Transverse colon (tissue), 4 donors: ENCODE measurements at regions of chr18 and their contacts with region 1.

Region 1: GRCh38 chr18:52475325-52475724 is 135.3 kb downstream of the DCC start:
- DNase-seq: no peak
- H3K4me3 ChIP-seq: no peak overlapping the region
- H3K27ac ChIP-seq: no peak overlapping the region
- H3K4me1 ChIP-seq: no peaks in the 10 kb centered on the region
- H3K27me3 ChIP-seq: no peaks in the 10 kb centered on the region
- CTCF ChIP-seq: no peak
- EP300 ChIP-seq: no peak
- POLR2A ChIP-seq: no peak

Region 2: DNA sequence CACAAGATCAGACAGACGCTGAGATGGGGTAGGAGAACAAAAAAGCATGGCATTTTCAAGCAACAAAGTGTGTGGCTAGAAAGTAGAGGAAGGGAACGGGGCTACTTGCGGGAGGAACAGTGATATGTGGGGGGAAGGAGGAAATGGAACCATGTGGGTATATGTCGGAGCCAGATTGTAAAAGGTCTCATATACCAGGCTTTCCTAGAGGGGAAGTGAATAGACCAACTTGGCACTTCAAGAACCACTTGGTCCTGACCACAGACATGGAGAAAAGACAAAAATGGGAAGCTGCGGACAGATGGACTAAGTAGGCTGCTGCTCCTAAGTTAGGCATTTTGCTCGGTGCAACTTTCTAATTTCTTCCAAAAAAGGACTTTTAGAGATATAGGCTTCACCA is 60.7 kb after region 1 on chr18:
- in situ Hi-C with region 1: no loop called
- intact Hi-C with region 1: loop called (anchors 10 kb)
- DNase-seq: no peak
- H3K4me3 ChIP-seq: no peak overlapping the region
- H3K27ac ChIP-seq: no peak overlapping the region
- H3K4me1 ChIP-seq: no peaks in the 10 kb centered on the region
- H3K27me3 ChIP-seq: no peaks in the 10 kb centered on the region
- CTCF ChIP-seq: no peak
- EP300 ChIP-seq: no peak
- POLR2A ChIP-seq: no peak